Activated naive CD4-positive, alpha-beta T cell treated with anti-CD3 and anti-CD28 coated beads for 36 hours (primary cell): ENCODE measurements at regions of chr6 and their contacts with region 1.

Region 1: GRCh38 chr6:16319813-16320532 is 81.6 kb downstream of the GMPR start:
- DNase-seq: peak; percentile 86
- H3K4me3 Mint-ChIP-seq: peak overlapping the region; percentile 54
- H3K27ac Mint-ChIP-seq: peak overlapping the region; percentile 85
- H3K4me1 Mint-ChIP-seq: peaks cover 75% of the 10 kb centered on the region
- H3K27me3 Mint-ChIP-seq: no peaks in the 10 kb centered on the region

Region 2: DNA sequence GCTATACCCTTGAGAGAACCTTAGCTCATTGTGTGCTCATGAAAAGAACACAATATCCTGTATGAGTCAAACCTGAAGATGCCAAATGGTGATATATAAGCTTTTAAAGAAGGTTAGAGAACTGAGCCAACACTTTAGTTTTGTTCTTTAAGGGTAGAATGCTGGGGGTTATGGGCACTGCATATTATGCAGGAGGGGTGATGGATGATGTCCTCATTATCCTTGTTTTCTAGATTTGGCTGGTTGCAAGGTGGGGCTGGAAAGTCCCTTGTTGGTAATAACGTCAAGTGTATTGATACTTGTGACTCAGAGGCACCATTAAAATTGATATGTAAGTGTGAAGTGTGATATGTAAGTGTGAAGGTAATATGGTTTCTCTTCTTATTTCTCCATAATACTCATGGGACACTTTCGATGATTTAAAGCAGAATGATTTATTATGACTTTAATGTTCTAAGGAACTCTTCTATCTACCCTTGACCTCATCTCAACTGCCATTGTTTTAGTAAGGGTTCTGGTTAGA is 543.5 kb before region 1 on chr6:
- CTCF ChIA-PET with region 1: no interaction called
- intact Hi-C with region 1: loop called (anchors 1 kb)
- DNase-seq: peak; percentile 69
- H3K4me3 Mint-ChIP-seq: no peak overlapping the region
- H3K27ac Mint-ChIP-seq: peak overlapping the region; percentile 76
- H3K4me1 Mint-ChIP-seq: peaks cover 40% of the 10 kb centered on the region
- H3K27me3 Mint-ChIP-seq: peaks cover 4% of the 10 kb centered on the region

Region 3: DNA sequence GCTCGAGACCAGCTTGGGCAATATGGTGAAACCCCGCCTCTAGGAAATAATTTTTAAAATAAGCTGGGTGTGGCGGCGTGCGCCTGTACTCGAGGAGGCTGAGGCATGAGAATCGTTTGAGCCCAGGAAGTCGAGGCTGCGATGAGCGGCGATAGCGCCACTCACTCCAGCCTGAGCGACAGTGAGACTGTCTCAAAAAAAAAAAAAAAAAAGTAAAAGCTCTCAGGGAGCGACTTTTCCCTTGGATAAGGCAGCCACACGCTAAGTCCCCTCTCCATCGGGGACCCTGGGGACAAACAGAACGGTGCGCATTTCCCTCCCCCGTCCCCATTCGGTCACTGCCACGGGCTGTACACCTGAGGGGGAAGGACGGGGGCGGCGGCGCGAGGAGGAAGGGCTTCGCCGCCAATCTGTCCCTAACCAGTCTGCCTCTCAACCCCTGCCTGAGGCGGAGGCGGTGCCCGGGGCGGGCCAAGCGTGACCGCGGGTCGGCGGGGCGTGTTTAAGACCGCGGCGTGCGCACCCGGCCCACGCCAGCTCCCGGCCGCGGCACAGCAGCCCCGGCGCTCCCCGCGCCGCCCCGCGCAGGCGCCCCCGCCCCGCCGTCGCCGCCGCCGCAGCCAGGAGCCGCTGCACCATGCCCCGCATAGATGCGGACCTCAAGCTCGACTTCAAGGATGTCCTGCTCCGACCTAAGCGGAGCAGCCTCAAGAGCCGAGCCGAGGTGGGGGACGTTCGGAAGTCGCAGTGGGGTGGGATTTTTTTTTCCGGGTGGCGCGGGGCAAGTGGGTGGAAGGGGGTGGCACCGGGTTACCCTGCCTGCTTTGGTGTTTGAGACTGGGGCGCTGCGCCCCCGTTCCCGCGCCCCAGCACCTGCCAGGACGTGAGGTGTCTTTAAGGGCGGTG is 81.7 kb before region 1 on chr6 and contains the start of gene GMPR:
- CTCF ChIA-PET with region 1: interaction called, 17 read pairs
- intact Hi-C with region 1: loop called (anchors 5 kb)
- DNase-seq: peak; percentile 74
- H3K4me3 Mint-ChIP-seq: peak within 1 kb of the TSS; percentile 76
- H3K27ac Mint-ChIP-seq: no peak within 1 kb of the TSS
- H3K4me1 Mint-ChIP-seq: peaks cover 18% of the 10 kb centered on the region
- H3K27me3 Mint-ChIP-seq: peaks cover 39% of the 10 kb centered on the region
- total RNA-seq, gene GMPR: 0.94 to 1.0 TPM

Region 4: GRCh38 chr6:16471222-16471909 is 151.4 kb after region 1 on chr6:
- CTCF ChIA-PET with region 1: interaction called, 4 read pairs
- intact Hi-C with region 1: loop called (anchors 1 kb)
- DNase-seq: no peak
- H3K4me3 Mint-ChIP-seq: no peak overlapping the region
- H3K27ac Mint-ChIP-seq: peak overlapping the region; percentile 68
- H3K4me1 Mint-ChIP-seq: peaks cover 60% of the 10 kb centered on the region
- H3K27me3 Mint-ChIP-seq: no peaks in the 10 kb centered on the region

Region 5: DNA sequence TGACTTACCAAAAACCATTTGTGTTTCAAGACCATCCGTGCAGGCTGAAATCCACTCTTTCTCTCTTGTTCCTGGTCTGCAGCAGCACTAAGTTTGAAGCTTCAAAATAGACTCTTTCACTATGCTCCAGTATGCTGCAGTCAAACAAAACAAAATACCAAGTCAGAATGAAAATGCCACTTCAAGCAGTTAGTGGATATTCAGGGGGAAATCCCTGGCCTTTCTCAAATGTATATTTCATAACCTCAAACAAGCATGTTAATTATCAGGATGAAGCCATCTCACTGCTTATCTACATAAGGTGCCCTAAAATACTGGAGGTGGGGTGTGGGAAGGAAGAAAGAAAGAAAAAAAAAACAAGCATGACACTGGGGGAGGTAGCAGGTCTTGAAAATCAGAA is 337.8 kb after region 1 on chr6:
- CTCF ChIA-PET with region 1: no interaction called
- intact Hi-C with region 1: loop called (anchors 1 kb)
- DNase-seq: peak; percentile 9
- H3K4me3 Mint-ChIP-seq: peak overlapping the region; percentile 2
- H3K27ac Mint-ChIP-seq: peak overlapping the region; percentile 32
- H3K4me1 Mint-ChIP-seq: peaks cover 43% of the 10 kb centered on the region
- H3K27me3 Mint-ChIP-seq: no peaks in the 10 kb centered on the region

Region 6: GRCh38 chr6:17015144-17015543 is 695.2 kb after region 1 on chr6:
- CTCF ChIA-PET with region 1: no interaction called
- intact Hi-C with region 1: loop called (anchors 2 kb)
- DNase-seq: peak; percentile 56
- H3K4me3 Mint-ChIP-seq: peak overlapping the region; percentile 41
- H3K27ac Mint-ChIP-seq: no peak overlapping the region
- H3K4me1 Mint-ChIP-seq: peaks cover 18% of the 10 kb centered on the region
- H3K27me3 Mint-ChIP-seq: peaks cover 27% of the 10 kb centered on the region

Region 7: DNA sequence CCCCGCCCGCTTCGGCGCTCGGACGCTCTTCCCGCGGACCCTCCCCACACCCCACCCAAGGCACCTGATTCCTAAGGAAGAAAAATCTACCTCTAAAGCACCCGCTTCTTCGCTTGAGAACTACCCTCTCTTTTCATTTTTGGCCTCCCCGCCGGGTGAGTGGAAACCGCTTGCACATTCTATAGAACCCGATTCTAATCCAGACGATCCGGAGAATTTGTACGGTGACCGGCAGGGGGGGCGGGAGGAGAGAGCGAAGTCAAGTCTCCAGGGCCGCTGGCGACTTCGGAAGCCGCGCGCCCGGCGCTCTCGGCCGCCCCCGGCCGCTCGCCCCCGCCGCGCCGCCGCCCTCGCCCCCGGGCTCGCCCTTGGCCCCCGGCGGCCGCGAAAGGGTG is 961.1 kb after region 1 on chr6 and contains the start of gene RBM24:
- CTCF ChIA-PET with region 1: no interaction called
- intact Hi-C with region 1: no loop called
- DNase-seq: peak; percentile 64
- H3K4me3 Mint-ChIP-seq: peak within 1 kb of the TSS; percentile 57
- H3K27ac Mint-ChIP-seq: no peak within 1 kb of the TSS
- H3K4me1 Mint-ChIP-seq: peaks cover 10% of the 10 kb centered on the region
- H3K27me3 Mint-ChIP-seq: peaks cover 56% of the 10 kb centered on the region
- total RNA-seq, gene RBM24: not detected